Sciatic nerve (tissue), 2 donors: ENCODE measurements at regions of chr2 and their contacts with region 1.

Region 1: GRCh38 chr2:15636972-15637785 is 45.5 kb downstream of the DDX1 start:
- DNase-seq: peak; percentile 85
- ATAC-seq: peak; percentile 94

Region 2: GRCh38 chr2:15492773-15493325 is 144.3 kb before region 1 on chr2:
- intact Hi-C with region 1: no loop called
- DNase-seq: no peak
- ATAC-seq: no peak

Region 3: DNA sequence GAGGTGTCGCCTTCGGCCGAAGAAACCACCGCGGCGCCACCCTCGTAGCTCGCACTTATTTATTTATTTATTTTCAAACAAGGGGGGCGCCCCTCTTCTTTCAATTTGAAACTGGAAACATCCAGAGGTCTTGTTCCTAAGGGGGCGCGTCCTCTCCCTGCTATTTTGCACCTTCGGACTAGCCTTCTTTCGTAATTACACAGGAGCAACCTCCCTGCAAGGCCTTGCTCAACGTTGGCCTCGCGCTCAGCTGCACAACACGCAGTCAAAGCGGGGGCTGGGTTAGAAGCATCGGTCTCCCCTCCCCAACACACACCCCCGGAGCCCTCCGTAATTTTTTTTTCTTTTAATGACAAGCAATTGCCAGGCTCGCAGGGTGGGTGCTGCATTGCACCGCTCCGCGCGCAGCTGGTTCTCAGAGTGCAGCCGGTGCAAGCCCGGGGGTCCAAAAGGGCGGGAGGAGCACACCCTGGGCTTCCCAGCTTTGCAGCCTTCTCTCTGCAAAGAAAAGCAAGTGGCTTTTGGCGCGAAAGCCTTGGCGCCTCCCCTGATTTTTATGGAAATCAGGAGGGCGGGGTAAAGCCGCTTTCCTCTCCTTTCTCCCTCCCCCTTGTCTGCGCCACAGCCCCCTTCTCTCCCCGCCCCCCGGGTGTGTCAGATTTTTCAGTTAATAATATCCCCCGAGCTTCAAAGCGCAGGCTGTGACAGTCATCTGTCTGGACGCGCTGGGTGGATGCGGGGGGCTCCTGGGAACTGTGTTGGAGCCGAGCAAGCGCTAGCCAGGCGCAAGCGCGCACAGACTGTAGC is 302.9 kb after region 1 on chr2 and contains the start of gene MYCN:
- intact Hi-C with region 1: loop called (anchors 10 kb)
- DNase-seq: peak; percentile 86
- ATAC-seq: peak; percentile 61
- total RNA-seq, gene MYCN: 7.0 TPM

Region 4: DNA sequence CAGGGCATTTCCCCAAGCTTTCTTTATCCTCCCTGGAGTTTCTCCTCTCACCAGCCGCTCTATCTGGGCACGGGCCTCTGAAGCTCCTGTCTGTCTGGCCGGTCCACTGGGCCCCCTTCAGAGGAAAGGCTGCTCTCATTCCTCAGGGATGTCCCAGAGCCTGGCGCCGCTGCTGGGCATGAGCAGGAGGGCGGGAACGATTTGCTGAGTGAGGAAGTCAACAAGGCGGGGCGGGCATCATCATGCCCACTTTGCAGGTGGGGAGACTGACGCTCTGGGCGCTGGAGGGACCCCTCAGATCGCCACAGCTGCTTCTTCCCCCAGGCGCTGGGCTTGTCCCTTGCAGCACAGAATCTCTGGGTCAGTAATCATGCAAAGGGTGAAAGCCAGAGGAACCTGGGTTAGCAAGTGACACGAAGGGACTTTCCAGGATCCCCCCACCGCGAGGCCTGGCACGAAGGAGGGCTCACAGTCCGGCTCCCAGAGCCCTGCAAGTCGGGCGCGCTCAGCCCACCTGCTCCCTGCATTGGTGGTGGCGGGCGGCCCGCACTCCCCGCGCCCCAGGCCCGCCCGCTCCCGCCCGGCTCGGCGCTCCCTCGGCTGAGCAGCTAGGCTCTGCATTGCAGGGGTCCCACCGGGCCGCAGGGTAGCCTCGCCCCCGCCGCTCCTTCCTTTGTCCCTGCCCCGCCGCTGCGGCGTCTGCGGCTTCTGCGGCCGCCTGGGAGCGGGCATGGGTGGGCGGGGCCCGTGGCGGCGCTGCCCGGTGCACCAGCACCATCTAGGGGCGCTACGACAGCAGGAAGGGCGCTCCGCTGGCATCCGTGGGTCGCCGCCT is 870.7 kb after region 1 on chr2:
- intact Hi-C with region 1: loop called (anchors 10 kb)
- DNase-seq: peak; percentile 63
- ATAC-seq: peak; percentile 83

Region 5: DNA sequence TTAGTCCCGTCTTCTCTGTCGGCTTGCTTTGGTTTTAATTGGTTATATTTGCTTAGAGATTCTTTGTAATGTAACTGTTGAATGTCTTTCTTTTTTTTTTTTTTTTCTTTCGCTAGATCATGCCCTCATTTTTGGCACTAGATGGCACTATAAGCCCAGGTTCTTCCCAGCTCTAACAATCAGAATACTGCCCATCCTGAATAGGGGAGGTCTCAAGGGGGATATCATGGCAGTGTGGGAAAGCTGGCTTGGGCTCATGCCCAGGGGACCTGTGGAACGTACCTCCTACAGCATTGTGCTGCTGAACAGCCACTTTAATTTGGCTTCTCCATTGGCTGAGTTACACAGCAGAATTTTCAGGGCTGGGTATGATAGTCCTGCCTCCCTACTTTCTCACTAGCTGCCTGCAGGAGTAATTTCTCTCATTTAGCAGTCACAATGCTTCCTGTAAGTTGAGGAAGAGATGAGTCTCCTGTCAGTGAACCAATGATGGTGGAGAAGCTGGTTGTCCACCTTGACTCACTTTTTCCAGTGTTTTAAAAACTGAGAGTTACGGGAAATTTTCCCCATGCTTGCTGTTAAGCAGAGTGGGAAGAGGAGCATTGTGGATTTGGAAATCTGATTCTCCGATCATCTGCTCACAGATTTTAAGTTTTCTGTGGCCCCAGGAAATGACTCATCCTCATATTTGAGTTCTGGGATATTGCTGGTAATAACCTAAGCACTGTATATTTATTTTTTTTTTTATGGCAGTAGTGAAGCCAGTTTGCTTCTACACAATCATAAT is 1833.9 kb after region 1 on chr2:
- intact Hi-C with region 1: no loop called
- DNase-seq: no peak
- ATAC-seq: no peak